CD8-positive, alpha-beta memory T cell (primary cell): ENCODE measurements at regions of chr19 and their contacts with region 1.

Region 1: DNA sequence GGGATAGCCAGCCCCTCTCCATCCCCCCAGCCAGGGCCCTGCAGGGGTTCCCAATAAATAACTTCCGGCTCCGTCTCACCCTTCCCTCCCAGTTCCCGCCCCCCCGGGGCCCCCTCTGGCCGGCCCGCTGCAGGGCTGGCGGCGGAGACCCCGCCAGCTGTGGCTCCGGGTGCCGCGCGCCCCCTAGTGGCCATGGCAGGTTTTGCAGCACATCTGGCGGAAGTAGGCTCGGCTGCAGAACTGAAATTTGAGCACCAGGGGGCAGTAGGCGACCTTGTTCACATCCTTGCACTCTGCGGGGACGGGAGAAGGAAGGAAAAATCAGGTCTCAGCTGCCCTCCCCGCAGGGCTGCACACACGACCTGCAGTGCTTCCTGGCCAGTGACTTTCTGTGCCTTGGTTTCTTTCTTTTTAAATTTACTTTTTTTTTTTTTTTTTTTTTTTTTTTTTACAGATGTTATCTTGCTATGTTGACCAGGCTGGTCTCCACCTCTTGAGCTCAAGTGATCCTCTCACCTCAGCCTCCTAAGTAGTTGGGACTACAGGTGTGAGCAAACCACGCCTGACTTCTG is 3.6 kb upstream of the MYO1F start:
- DNase-seq: peak; percentile 79 to 89 (median 82)
- H3K4me3 ChIP-seq: no peak overlapping the region
- H3K4me3 Mint-ChIP-seq: no peak overlapping the region
- H3K27ac ChIP-seq: no peak overlapping the region
- H3K27ac Mint-ChIP-seq: peak overlapping the region in 1 of 8 donors; percentile 57
- H3K4me1 ChIP-seq: peaks cover 41% of the 10 kb centered on the region
- H3K4me1 Mint-ChIP-seq: peaks cover 17 to 50% (median 27%) of the 10 kb centered on the region in 3 donors
- H3K27me3 ChIP-seq: no peaks in the 10 kb centered on the region
- H3K27me3 Mint-ChIP-seq: no peaks in the 10 kb centered on the region

Region 2: DNA sequence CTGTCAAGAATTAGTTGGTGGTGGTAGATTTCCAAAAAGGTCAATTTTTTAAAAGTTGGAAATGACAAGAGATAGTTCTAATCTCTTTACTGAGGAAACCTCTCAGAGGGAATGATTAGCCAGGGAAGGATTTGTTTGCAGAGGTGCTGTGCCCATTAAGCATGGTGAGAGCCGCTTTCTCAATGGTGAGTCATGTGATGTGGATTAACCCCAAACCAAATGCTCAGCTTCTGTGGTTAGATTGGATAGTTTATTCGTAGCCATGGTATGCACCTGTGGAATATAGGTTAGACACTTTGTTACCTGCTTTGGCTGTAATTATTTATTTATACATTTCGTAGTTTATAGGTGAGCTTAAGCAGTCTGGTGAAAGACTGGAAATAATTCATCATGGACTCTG is 128.9 kb before region 1 on chr19:
- CTCF ChIA-PET with region 1: interaction called, 20 read pairs
- POLR2A ChIA-PET with region 1: interaction called, 3 read pairs
- DNase-seq: no peak
- H3K4me3 ChIP-seq: no peak overlapping the region
- H3K4me3 Mint-ChIP-seq: peak overlapping the region in 6 of 7 donors; percentile 29 to 63 (median 56)
- H3K27ac ChIP-seq: no peak overlapping the region
- H3K27ac Mint-ChIP-seq: peak overlapping the region in 7 of 8 donors; percentile 9 to 70 (median 63)
- H3K4me1 ChIP-seq: peaks cover 73% of the 10 kb centered on the region
- H3K4me1 Mint-ChIP-seq: peaks cover 80 to 95% (median 89%) of the 10 kb centered on the region in 3 donors
- H3K27me3 ChIP-seq: no peaks in the 10 kb centered on the region
- H3K27me3 Mint-ChIP-seq: no peaks in the 10 kb centered on the region

Region 3: DNA sequence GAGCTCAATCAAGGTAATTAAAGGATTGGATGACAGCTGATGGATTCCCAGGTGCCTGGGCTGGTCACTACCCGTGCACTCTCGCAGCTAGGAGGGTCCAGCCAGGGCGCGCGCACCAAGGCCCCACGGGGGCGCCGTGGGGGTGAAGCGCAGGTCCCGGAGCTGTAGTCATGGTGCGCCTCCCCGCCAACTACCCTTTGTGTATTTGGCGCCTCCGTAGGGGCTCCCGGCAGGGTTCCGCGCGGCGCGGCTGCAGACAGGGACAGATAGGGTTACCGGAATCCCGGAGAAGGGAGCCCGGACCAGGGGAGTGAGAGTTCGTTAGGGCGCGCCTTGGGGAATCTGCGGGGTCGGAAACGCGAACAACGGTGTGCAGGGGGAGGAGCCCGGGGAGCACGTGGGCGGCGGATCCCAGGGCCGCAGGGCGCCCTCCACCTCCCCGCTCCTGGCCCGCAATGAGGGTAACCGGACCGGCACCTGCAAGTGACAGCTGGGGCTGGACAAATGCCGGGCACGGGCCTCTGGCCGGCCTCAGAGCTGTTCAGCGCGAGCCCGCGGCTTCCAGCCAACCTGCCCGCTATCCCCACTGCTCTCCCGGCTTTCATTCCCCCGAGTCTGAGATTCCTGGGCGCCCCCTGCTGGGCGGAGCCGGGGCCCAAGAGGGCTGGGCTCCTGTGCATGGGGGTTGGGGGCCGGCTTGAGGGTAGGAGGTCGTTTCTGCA is 75.0 kb before region 1 on chr19:
- CTCF ChIA-PET with region 1: interaction called, 40 read pairs
- POLR2A ChIA-PET with region 1: interaction called, 8 read pairs
- DNase-seq: peak; percentile 47 to 73 (median 56)
- H3K4me3 ChIP-seq: peak overlapping the region; percentile 66
- H3K4me3 Mint-ChIP-seq: peak overlapping the region; percentile 61 to 96 (median 87)
- H3K27ac ChIP-seq: peak overlapping the region; percentile 1
- H3K27ac Mint-ChIP-seq: peak overlapping the region; percentile 35 to 94 (median 75)
- H3K4me1 ChIP-seq: peaks cover 13% of the 10 kb centered on the region
- H3K4me1 Mint-ChIP-seq: peaks cover 10 to 19% (median 14%) of the 10 kb centered on the region in 3 donors
- H3K27me3 ChIP-seq: no peaks in the 10 kb centered on the region
- H3K27me3 Mint-ChIP-seq: no peaks in the 10 kb centered on the region

Region 4: DNA sequence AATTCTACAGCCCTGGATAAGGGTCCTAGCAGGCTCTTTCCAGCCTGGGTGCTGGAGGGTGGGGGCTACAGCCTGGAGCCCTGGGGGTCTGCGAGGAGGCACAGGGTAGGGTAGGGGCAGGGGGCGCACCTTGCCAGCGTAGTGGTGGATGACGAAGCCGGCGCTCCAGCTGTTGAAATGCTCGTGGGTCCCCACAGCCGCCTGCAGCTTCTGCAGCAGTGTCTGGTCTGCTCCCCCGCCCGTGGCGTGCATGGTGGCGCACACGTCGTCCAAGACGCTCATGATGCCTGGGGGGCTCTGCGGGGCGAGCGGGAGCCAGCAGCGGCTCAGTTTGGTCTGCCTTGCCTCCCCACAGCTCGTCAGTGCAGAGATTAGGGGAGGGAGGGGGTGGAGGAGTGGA is 36.6 kb before region 1 on chr19:
- CTCF ChIA-PET with region 1: interaction called, 112 read pairs
- POLR2A ChIA-PET with region 1: interaction called, 4 read pairs
- DNase-seq: no peak
- H3K4me3 ChIP-seq: no peak overlapping the region
- H3K4me3 Mint-ChIP-seq: no peak overlapping the region
- H3K27ac ChIP-seq: no peak overlapping the region
- H3K27ac Mint-ChIP-seq: no peak overlapping the region
- H3K4me1 ChIP-seq: no peaks in the 10 kb centered on the region
- H3K4me1 Mint-ChIP-seq: peaks cover 0 to 2% (median 0%) of the 10 kb centered on the region in 3 donors
- H3K27me3 ChIP-seq: no peaks in the 10 kb centered on the region
- H3K27me3 Mint-ChIP-seq: peaks cover 0 to 3% of the 10 kb centered on the region in 2 donors

Region 5: GRCh38 chr19:8592231-8593009 is 11.6 kb after region 1 on chr19:
- CTCF ChIA-PET with region 1: interaction called, 34 read pairs
- POLR2A ChIA-PET with region 1: interaction called, 4 read pairs
- DNase-seq: peak; percentile 92 to 98 (median 95)
- H3K4me3 ChIP-seq: peak overlapping the region; percentile 43
- H3K4me3 Mint-ChIP-seq: peak overlapping the region; percentile 57 to 90 (median 86)
- H3K27ac ChIP-seq: no peak overlapping the region
- H3K27ac Mint-ChIP-seq: peak overlapping the region; percentile 51 to 93 (median 80)
- H3K4me1 ChIP-seq: peaks cover 16% of the 10 kb centered on the region
- H3K4me1 Mint-ChIP-seq: peaks cover 14 to 30% (median 18%) of the 10 kb centered on the region in 3 donors
- H3K27me3 ChIP-seq: no peaks in the 10 kb centered on the region
- H3K27me3 Mint-ChIP-seq: peaks cover 0 to 3% of the 10 kb centered on the region in 2 donors

Region 6: GRCh38 chr19:8641908-8642547 is 61.2 kb after region 1 on chr19:
- CTCF ChIA-PET with region 1: interaction called, 46 read pairs
- POLR2A ChIA-PET with region 1: no interaction called
- DNase-seq: peak in 2 of 5 donors; percentile 43 to 49
- H3K4me3 ChIP-seq: no peak overlapping the region
- H3K4me3 Mint-ChIP-seq: no peak overlapping the region
- H3K27ac ChIP-seq: no peak overlapping the region
- H3K27ac Mint-ChIP-seq: peak overlapping the region in 1 of 8 donors; percentile 52
- H3K4me1 ChIP-seq: no peaks in the 10 kb centered on the region
- H3K4me1 Mint-ChIP-seq: peaks cover 1 to 6% (median 5%) of the 10 kb centered on the region in 3 donors
- H3K27me3 ChIP-seq: no peaks in the 10 kb centered on the region
- H3K27me3 Mint-ChIP-seq: peaks cover 10 to 33% of the 10 kb centered on the region in 2 donors